H1 (cell line): ENCODE measurements at regions of chr16 and their contacts with region 1.

Region 1: GRCh38 chr16:1964506-1965395 is at the start of gene RPS2:
- DNase-seq: peak; percentile 94 to 97
- H3K4me3 ChIP-seq: peak within 1 kb of the TSS; percentile 98 to 99 (median 98)
- H3K27ac ChIP-seq: peak within 1 kb of the TSS; percentile 94
- H3K4me1 ChIP-seq: peaks cover 0 to 22% (median 5%) of the 10 kb centered on the region in 4 experiments; a peak in 5 of 7 replicates
- H3K27me3 ChIP-seq: no peaks in the 10 kb centered on the region
- CTCF ChIP-seq: no peak
- EP300 ChIP-seq: no peak
- POLR2A ChIP-seq: peak; percentile 99 to 100
- RAD21 ChIP-seq: no peak
- total RNA-seq, gene RPS2: 3,974 and 4,042 TPM in 2 replicates

Region 2: GRCh38 chr16:1863681-1864460 is 100.9 kb before region 1 on chr16:
- CTCF ChIA-PET with region 1: interaction called, 6 read pairs
- POLR2A ChIA-PET with region 1: interaction called, 19 read pairs
- DNase-seq: no peak
- H3K4me3 ChIP-seq: no peak overlapping the region
- H3K27ac ChIP-seq: no peak overlapping the region
- H3K4me1 ChIP-seq: no peaks in the 10 kb centered on the region
- H3K27me3 ChIP-seq: peaks cover 0 to 3% (median under 1%) of the 10 kb centered on the region in 4 experiments; a peak in 5 of 7 replicates
- CTCF ChIP-seq: peak in 2 of 3 experiments; percentile 8 to 31; a peak in 3 of 4 replicates
- EP300 ChIP-seq: no peak
- POLR2A ChIP-seq: no peak
- RAD21 ChIP-seq: peak; percentile 45 to 58

Region 3: GRCh38 chr16:1913327-1914083 is 51.2 kb before region 1 on chr16:
- CTCF ChIA-PET with region 1: interaction called, 3 read pairs
- POLR2A ChIA-PET with region 1: interaction called, 17 read pairs
- DNase-seq: no peak
- H3K4me3 ChIP-seq: no peak overlapping the region
- H3K27ac ChIP-seq: no peak overlapping the region
- H3K4me1 ChIP-seq: peaks cover 0 to 33% (median 18%) of the 10 kb centered on the region in 4 experiments; a peak in 6 of 7 replicates
- H3K27me3 ChIP-seq: peaks cover 16 to 41% (median 35%) of the 10 kb centered on the region in 4 experiments
- CTCF ChIP-seq: no peak
- EP300 ChIP-seq: no peak
- POLR2A ChIP-seq: no peak
- RAD21 ChIP-seq: no peak

Region 4: GRCh38 chr16:1929578-1930337 is 35.0 kb before region 1 on chr16:
- CTCF ChIA-PET with region 1: interaction called, 9 read pairs
- POLR2A ChIA-PET with region 1: interaction called, 27 read pairs
- DNase-seq: peak; percentile 57 to 99
- H3K4me3 ChIP-seq: peak overlapping the region; percentile 21 to 55 (median 36); a peak in 7 of 8 replicates
- H3K27ac ChIP-seq: no peak overlapping the region
- H3K4me1 ChIP-seq: peaks cover 0 to 10% (median 4%) of the 10 kb centered on the region in 4 experiments; a peak in 5 of 7 replicates
- H3K27me3 ChIP-seq: peaks cover 0 to 17% (median 9%) of the 10 kb centered on the region in 4 experiments; a peak in 5 of 7 replicates
- CTCF ChIP-seq: peak; percentile 87 to 99 (median 89)
- EP300 ChIP-seq: peak in 1 of 2 experiments; percentile 60; a peak in 1 of 3 replicates
- POLR2A ChIP-seq: no peak
- RAD21 ChIP-seq: peak; percentile 51 to 76

Region 5: GRCh38 chr16:1950047-1950446 is 14.7 kb before region 1 on chr16:
- CTCF ChIA-PET with region 1: interaction called, 7 read pairs
- POLR2A ChIA-PET with region 1: interaction called, 336 read pairs
- DNase-seq: no peak
- H3K4me3 ChIP-seq: no peak overlapping the region
- H3K27ac ChIP-seq: no peak overlapping the region
- H3K4me1 ChIP-seq: peaks cover 0 to 3% (median 0%) of the 10 kb centered on the region in 4 experiments; a peak in 3 of 7 replicates
- H3K27me3 ChIP-seq: no peaks in the 10 kb centered on the region
- CTCF ChIP-seq: no peak
- EP300 ChIP-seq: no peak
- POLR2A ChIP-seq: no peak
- RAD21 ChIP-seq: no peak

Region 6: DNA sequence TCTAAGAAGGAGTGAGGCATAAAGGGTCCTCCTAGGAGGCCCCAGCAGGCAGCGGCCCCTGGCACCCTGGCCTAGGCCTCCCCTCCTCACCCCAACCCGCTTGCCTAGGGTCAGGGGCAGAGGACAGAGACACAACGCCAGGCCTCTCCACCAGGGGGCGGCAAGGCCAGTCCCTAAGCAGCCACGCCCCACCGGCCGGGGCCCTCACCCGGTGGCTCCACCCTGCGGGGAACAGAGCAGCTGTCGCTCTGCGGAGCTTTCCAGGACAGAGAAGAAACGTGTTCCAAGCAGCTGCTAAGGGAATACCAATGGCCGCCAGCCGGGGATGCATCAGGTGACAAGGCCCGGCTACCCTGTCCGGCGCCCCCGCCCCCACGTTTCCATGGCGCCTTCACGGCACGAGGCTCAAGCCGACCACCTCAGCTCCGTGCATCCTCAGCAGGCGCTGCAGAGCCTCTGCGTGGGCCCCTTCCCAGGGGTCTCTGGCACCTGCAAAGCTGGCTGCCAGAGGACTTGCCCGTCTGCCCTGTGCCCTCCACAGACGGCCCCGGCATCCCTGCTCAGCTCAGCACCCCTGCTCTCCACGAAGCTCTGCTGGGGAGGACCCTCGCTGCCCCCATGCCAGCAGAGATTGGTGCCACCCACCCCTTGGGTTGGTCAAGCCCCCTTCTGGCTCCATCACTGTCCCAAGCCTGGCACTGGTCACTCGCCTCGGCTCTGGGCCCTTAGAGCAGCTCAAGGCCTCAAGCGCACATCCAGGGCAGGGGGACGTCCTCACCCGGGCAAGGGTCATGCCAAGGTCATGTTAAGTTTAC is 39.3 kb after region 1 on chr16:
- CTCF ChIA-PET with region 1: no interaction called
- POLR2A ChIA-PET with region 1: interaction called, 736 read pairs
- DNase-seq: peak; percentile 90 to 99
- H3K4me3 ChIP-seq: peak overlapping the region in 2 of 4 experiments; percentile 14 to 33; a peak in 3 of 8 replicates
- H3K27ac ChIP-seq: peak overlapping the region; percentile 53; the same call in 1 of the 2 replicates
- H3K4me1 ChIP-seq: peaks cover 0 to 33% (median 18%) of the 10 kb centered on the region in 4 experiments; a peak in 5 of 7 replicates
- H3K27me3 ChIP-seq: no peaks in the 10 kb centered on the region
- CTCF ChIP-seq: peak in 2 of 3 experiments; percentile 98 to 99; a peak in 3 of 4 replicates
- EP300 ChIP-seq: peak in 1 of 2 experiments; percentile 12; a peak in 1 of 3 replicates
- POLR2A ChIP-seq: no peak
- RAD21 ChIP-seq: peak; percentile 55 to 62

Region 7: GRCh38 chr16:2047330-2048115 is 82.8 kb after region 1 on chr16 and contains the starts of genes NTHL1 and TSC2:
- CTCF ChIA-PET with region 1: no interaction called
- POLR2A ChIA-PET with region 1: interaction called, 10 read pairs
- DNase-seq: peak; percentile 90 to 97
- H3K4me3 ChIP-seq: peak within 1 kb of the TSS; percentile 42 to 89 (median 86)
- H3K27ac ChIP-seq: no peak within 1 kb of the TSS
- H3K4me1 ChIP-seq: peaks cover 0 to 3% (median 1%) of the 10 kb centered on the region in 4 experiments; a peak in 3 of 7 replicates
- H3K27me3 ChIP-seq: no peaks in the 10 kb centered on the region; a peak in 1 of 7 replicates
- CTCF ChIP-seq: peak in 1 of 3 experiments; percentile 15; a peak in 1 of 4 replicates
- EP300 ChIP-seq: no peak
- POLR2A ChIP-seq: no peak
- RAD21 ChIP-seq: no peak; a peak in 1 of 4 replicates
- total RNA-seq, gene NTHL1: 70.9 and 84.5 TPM in 2 replicates
- total RNA-seq, gene TSC2: 91.1 and 96.6 TPM in 2 replicates

Region 8: DNA sequence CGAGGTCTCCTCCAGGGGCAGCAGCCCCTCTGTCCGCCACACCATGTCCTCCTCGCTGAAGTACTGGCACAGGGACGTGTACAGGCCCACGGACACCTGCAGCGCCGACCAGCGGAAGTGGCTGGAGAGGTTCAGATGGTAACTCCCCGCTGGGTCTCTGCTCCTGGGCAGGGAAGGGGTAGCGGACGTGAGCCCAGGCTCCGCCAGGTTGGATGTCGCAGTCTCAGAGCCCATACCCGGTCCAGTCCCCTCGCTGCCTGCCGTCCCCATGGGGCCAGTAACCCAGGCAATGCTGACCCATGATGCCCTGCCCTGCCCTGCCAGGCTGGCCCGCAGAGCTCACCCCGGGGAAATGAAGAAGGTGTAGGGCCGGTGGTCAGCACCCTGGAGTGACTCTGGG is 137.7 kb after region 1 on chr16:
- CTCF ChIA-PET with region 1: no interaction called
- POLR2A ChIA-PET with region 1: no interaction called
- DNase-seq: no peak
- H3K4me3 ChIP-seq: no peak overlapping the region
- H3K27ac ChIP-seq: no peak overlapping the region
- H3K4me1 ChIP-seq: no peaks in the 10 kb centered on the region
- H3K27me3 ChIP-seq: no peaks in the 10 kb centered on the region
- CTCF ChIP-seq: no peak
- EP300 ChIP-seq: no peak
- POLR2A ChIP-seq: no peak
- RAD21 ChIP-seq: no peak